ENCODE measurements at regions of chr4 and their contacts with region 1.

Region 1: GRCh38 chr4:46820154-46820553 is 88.9 kb downstream of the COX7B2 start:
- DNase-seq: no peak
- ATAC-seq: no peak
- H3K4me3 ChIP-seq: no peak overlapping the region
- H3K27ac ChIP-seq: no peak overlapping the region
- H3K4me1 ChIP-seq: no peaks in the 10 kb centered on the region
- H3K27me3 ChIP-seq: no peaks in the 10 kb centered on the region
- CTCF ChIP-seq: no peak

Region 2: DNA sequence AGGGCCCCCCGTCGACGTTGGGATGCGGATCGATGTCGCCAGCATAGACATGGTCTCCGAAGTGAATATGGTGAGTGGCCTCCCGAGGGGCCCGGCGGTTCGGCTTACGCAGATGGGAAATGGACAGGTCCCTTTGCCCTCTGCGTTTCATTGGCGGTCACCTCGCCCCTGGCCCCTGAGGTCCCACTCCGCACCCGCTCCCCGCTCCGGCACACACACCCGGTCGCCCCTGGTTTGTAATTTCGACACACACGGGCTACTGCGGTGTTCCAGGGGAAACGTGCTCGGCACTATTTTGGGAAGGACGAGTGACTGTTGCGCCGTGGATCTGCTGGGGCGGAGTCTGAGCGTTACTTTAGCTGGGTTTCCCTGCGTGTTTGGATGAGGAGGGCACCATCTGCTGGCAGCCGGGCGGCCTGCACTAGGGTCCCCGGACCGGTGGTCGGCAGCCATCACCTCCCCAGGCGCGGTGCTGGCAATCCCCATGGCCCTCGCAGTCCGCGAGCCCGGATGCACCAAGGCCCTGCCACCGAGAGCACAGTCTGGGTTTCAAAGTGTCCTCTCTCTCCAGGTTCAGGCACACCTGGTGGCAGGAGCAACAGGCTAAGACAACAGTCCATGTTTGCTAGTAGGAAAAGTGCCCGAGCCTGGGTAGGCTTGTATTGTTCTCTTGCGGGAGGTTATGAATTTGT is 212.4 kb after region 1 on chr4:
- intact Hi-C with region 1: loop called in 1 of 3 experiments (anchors 10 kb)
- DNase-seq: peak; percentile 12 to 74 (median 38)
- ATAC-seq: peak; percentile 75 to 93 (median 90)
- H3K4me3 ChIP-seq: peak overlapping the region; percentile 10 to 47 (median 27)
- H3K27ac ChIP-seq: no peak overlapping the region
- H3K4me1 ChIP-seq: no peaks in the 10 kb centered on the region
- H3K27me3 ChIP-seq: peaks cover 0 to 10% (median 0%) of the 10 kb centered on the region in 4 donors
- CTCF ChIP-seq: peak; percentile 23 to 44 (median 36)

Measured in pancreas (tissue), 10 donors.